HepG2 (cell line): ENCODE measurements at regions of chr17 and their contacts with region 1.

Region 1: DNA sequence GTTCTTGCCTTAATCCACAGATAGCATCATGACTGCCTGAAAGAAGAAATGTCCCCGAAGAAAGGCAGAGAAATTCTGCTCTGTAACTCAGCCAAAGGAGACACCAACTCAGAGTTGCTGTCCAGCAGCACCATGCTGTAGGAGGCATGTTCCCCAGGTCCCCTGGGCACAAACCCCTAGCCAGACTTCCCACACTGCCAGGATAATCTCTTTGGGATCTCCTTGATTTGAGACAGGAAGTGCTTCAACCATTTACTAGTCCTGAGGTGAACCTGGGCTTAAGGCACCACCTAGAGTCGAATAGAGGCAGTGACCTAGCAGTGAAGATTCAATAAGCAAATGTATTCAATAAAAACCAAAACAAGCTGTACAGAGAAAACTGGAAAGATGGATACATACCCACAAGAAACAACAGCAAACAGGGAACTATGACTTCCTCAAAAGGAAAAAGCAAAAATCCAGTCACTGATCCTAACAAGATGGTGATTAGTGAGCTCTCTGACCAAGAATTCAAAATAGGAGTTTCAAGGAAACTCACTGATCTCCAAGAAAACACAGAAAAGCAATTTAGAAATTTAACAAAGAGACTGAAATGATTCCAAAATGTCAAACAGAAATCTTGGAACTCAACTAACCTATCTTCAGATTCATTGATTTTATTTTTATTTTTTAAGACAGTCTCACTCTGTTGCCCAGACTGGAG is 5.7 kb downstream of the OR4D2 start:
- DNase-seq: peak; percentile 62
- ATAC-seq: peak; percentile 85
- H3K4me3 ChIP-seq: no peak overlapping the region
- H3K27ac ChIP-seq: no peak overlapping the region
- H3K4me1 ChIP-seq: no peaks in the 10 kb centered on the region
- H3K27me3 ChIP-seq: peaks cover 2 to 34% of the 10 kb centered on the region in 2 experiments; a peak in 4 of 5 replicates
- CTCF ChIP-seq: peak; percentile 66
- EP300 ChIP-seq: no peak
- POLR2A ChIP-seq: no peak
- RAD21 ChIP-seq: no peak

Region 2: DNA sequence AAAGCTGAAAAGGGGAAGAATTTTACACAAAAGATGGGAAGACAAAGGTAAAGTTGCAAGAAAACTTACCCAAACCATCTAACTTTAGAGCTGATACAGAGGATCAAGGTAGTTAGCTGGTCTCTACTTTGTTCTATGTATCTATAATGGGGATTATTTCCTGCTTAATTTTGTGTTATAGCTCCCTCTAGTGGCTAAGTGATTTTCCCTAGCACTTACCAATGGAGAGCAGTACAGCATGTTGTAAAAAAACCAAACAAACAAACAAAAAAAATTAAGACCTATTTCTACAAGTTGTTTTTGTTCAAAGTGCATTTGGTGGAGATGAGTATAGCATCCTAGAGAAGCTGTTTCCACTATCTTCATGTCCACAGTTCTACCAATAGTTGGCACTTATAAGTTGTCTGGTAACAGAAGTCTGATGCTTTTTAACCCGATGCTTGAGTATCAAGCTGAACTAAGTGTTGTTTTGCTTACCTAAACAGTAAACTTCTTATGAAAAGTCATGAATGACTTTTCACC is 173.0 kb before region 1 on chr17:
- CTCF ChIA-PET with region 1: no interaction called
- POLR2A ChIA-PET with region 1: no interaction called
- in situ Hi-C with region 1: no loop called
- intact Hi-C with region 1: no loop called
- DNase-seq: peak; percentile 76
- ATAC-seq: peak; percentile 49
- H3K4me3 ChIP-seq: no peak overlapping the region
- H3K27ac ChIP-seq: no peak overlapping the region
- H3K4me1 ChIP-seq: peaks cover 49% of the 10 kb centered on the region
- H3K27me3 ChIP-seq: no peaks in the 10 kb centered on the region
- CTCF ChIP-seq: peak; percentile 81
- EP300 ChIP-seq: no peak
- POLR2A ChIP-seq: peak in 1 of 2 experiments; percentile 67; a peak in 2 of 4 replicates
- RAD21 ChIP-seq: peak; percentile 50

Region 3: GRCh38 chr17:58121925-58122324 is 50.6 kb before region 1 on chr17:
- CTCF ChIA-PET with region 1: no interaction called
- POLR2A ChIA-PET with region 1: no interaction called
- in situ Hi-C with region 1: no loop called
- intact Hi-C with region 1: loop called (anchors 1 kb)
- DNase-seq: peak; percentile 56
- ATAC-seq: peak; percentile 57; the same call in 2 of the 3 replicates
- H3K4me3 ChIP-seq: no peak overlapping the region
- H3K27ac ChIP-seq: no peak overlapping the region
- H3K4me1 ChIP-seq: no peaks in the 10 kb centered on the region
- H3K27me3 ChIP-seq: peaks cover 0 to 8% of the 10 kb centered on the region in 2 experiments; a peak in 3 of 5 replicates
- CTCF ChIP-seq: peak; percentile 50
- EP300 ChIP-seq: no peak
- POLR2A ChIP-seq: no peak
- RAD21 ChIP-seq: no peak